ENCODE measurements at regions of chr18 and their contacts with region 1.

Region 1: DNA sequence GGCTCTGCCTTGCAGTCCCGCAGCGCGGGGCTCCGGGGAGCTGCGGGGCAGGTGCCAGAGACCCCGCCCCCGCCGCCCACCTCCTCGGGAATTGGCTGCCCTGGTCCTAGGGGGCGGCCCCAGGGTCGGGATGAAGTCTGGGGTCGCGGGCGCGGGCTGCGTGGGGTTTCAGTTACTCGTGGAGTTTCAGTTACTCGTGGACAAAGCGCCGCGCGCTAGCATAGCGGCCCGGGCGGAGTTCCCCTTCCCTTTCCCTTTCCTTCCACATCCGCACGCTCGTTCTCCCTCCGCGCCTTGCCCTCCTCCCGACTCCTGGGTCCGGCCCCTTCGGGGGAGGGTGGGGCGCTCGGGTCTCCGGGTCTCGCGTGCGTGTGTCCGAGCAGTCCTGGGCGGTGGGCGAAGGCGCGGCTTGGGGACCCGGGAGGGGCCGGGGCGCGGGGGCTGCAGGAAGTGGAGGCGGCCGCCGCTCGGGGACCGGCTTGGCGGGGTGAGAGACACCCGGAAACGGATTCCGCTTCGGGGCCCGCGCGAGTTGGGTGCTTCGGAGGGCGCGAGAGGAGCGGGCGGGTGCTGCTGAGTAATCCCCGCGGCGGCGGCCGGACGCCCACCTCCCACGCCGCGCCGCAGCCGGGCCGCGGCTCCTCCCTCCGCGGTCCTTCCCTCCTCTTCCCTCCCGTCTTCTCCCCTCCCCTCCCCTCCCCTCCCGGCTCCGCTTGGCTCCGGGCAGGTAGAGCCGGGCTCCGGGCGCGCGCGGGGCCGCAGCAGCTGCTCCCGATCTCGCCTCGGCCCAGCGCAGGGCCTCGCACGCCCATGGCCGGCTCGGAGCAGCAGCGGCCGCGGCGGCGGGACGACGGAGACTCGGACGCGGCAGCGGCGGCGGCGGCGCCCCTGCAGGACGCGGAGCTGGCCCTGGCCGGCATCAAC is at the start of gene TTC39C:
- DNase-seq: peak; percentile 72 to 84 (median 78)
- H3K4me3 ChIP-seq: peak within 1 kb of the TSS; percentile 56 to 93 (median 87)
- H3K27ac ChIP-seq: peak within 1 kb of the TSS; percentile 46 to 96 (median 86)
- H3K4me1 ChIP-seq: peaks cover 7 to 26% of the 10 kb centered on the region in 2 donors
- H3K27me3 ChIP-seq: no peaks in the 10 kb centered on the region
- CTCF ChIP-seq: peak in 1 of 6 experiments; percentile 3
- POLR2A ChIP-seq: peak in 1 of 2 donors; percentile 73
- total RNA-seq, gene TTC39C: 28.9 to 77.6 (median 49.4) TPM

Region 2: GRCh38 chr18:23982155-23983079 is 31.9 kb before region 1 on chr18:
- intact Hi-C with region 1: no loop called
- DNase-seq: peak; percentile 83 to 92 (median 86)
- H3K4me3 ChIP-seq: peak overlapping the region in 1 of 4 donors; percentile 24
- H3K27ac ChIP-seq: peak overlapping the region in 3 of 5 donors; percentile 28 to 83 (median 74)
- H3K4me1 ChIP-seq: peaks cover 0 to 22% of the 10 kb centered on the region in 2 donors
- H3K27me3 ChIP-seq: no peaks in the 10 kb centered on the region
- CTCF ChIP-seq: no peak
- POLR2A ChIP-seq: peak in 1 of 2 donors; percentile 39

Region 3: DNA sequence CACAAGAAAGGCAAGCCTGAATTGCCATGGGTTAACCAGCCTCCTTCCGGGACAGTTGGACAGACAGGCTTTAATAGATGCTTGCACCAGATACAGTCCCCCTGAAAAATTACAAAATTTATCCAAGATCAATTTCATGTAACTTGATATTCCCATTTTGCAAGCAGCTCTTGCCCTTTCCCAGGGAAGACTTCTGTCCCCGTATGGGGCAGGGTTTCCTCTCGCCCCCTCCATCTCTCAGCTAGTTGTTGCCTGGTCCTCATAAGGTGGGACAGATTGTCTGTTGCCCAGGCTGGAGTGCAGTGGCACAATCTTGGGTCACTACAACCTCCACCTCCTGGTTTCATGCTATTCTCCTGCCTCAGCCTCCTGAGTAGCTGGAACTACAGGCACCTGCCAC is 61.4 kb after region 1 on chr18:
- intact Hi-C with region 1: loop called in 1 of 2 experiments (anchors 10 kb)
- DNase-seq: no peak
- H3K4me3 ChIP-seq: no peak overlapping the region
- H3K27ac ChIP-seq: peak overlapping the region; percentile 35 to 90 (median 81)
- H3K4me1 ChIP-seq: peaks cover 10 to 14% of the 10 kb centered on the region in 2 donors
- H3K27me3 ChIP-seq: no peaks in the 10 kb centered on the region
- CTCF ChIP-seq: no peak
- POLR2A ChIP-seq: no peak

Region 4: GRCh38 chr18:24086082-24086481 is 71.8 kb after region 1 on chr18:
- intact Hi-C with region 1: no loop called
- DNase-seq: no peak
- H3K4me3 ChIP-seq: no peak overlapping the region
- H3K27ac ChIP-seq: no peak overlapping the region
- H3K4me1 ChIP-seq: peaks cover 0 to 17% of the 10 kb centered on the region in 2 donors
- H3K27me3 ChIP-seq: no peaks in the 10 kb centered on the region
- CTCF ChIP-seq: no peak
- POLR2A ChIP-seq: no peak

Region 5: DNA sequence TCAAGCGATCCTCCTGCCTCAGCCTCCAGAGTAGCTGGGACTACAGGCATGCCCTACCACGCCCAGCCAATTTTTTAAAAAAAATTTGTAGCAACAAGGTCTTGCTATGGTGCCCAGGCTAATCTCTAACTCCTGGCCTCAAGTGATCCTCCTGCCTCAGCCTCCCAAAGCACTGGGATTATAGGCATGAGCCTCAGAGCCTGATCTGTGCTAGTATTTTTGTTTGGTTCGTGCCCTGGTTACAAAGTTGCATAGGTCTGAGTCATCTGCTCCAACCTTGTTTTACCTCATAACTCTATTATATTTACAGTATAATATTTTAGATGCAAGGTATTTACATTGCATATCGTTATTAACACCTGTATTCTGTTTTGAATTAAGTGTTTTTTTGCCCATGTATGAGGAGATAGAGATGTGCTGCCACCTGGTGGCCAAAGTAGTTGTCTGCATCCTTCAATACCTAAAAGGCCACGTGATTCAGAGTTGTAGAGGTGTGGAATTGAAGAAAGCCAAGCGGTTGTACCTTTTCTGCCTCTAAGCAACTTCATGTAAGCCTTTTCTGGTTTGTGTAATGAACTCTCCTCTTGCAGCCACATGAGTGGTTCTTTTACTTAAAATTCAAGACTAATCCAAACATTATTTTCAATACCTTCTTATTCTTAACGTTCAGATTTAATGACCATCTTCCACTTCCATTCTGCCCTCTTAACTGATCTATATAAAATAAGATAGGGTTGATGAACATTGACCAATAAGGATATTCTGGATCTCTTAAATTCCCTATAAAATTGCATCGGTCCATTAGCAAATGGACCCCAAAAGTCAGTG is 104.6 kb after region 1 on chr18:
- intact Hi-C with region 1: loop called (anchors 5 to 10 kb)
- DNase-seq: peak; percentile 51 to 93 (median 80)
- H3K4me3 ChIP-seq: no peak overlapping the region
- H3K27ac ChIP-seq: no peak overlapping the region
- H3K4me1 ChIP-seq: peaks cover 19 to 24% of the 10 kb centered on the region in 2 donors
- H3K27me3 ChIP-seq: no peaks in the 10 kb centered on the region
- CTCF ChIP-seq: peak; percentile 88 to 98 (median 94)
- POLR2A ChIP-seq: no peak

Region 6: GRCh38 chr18:24126155-24126961 is 112.0 kb after region 1 on chr18:
- intact Hi-C with region 1: loop called in 1 of 2 experiments (anchors 10 kb)
- DNase-seq: no peak
- H3K4me3 ChIP-seq: no peak overlapping the region
- H3K27ac ChIP-seq: peak overlapping the region in 1 of 5 donors; percentile 6
- H3K4me1 ChIP-seq: peaks cover 0 to 22% of the 10 kb centered on the region in 2 donors
- H3K27me3 ChIP-seq: no peaks in the 10 kb centered on the region
- CTCF ChIP-seq: no peak
- POLR2A ChIP-seq: no peak

Measured in adrenal gland (tissue), 19 donors.